Heart left ventricle (tissue), 16 donors: ENCODE measurements at regions of chr12 and their contacts with region 1.

Region 1: DNA sequence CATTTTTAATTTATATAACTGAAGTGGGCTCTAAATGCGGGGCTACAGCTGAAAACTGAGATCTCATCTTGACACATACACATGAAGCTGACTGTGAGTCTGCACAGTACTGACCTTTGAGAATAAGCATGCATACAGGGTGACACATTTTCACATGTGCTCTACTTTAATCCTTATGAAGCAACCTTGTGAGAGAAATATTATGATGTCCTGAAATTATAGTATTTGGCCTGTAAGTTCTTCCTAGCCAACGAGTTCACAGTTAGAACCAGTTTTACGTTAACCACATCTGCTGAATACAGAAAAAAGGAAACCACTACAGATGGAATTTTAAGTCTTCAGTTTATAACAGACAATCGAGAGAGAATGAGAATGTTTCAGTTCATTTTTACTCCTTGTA is 70.3 kb downstream of the SPPL3 start:
- DNase-seq: no peak
- ATAC-seq: peak in 2 of 4 donors; percentile 53 to 57
- H3K4me3 ChIP-seq: no peak overlapping the region
- H3K27ac ChIP-seq: peak overlapping the region in 4 of 12 donors; percentile 15 to 49 (median 38)
- H3K4me1 ChIP-seq: peaks cover 0 to 84% (median 55%) of the 10 kb centered on the region in 12 donors
- H3K27me3 ChIP-seq: no peaks in the 10 kb centered on the region
- CTCF ChIP-seq: no peak
- POLR2A ChIP-seq: no peak

Region 2: GRCh38 chr12:120332041-120332440 is 501.8 kb before region 1 on chr12:
- intact Hi-C with region 1: no loop called
- DNase-seq: no peak
- ATAC-seq: no peak
- H3K4me3 ChIP-seq: no peak overlapping the region
- H3K27ac ChIP-seq: no peak overlapping the region
- H3K4me1 ChIP-seq: no peaks in the 10 kb centered on the region
- H3K27me3 ChIP-seq: no peaks in the 10 kb centered on the region
- CTCF ChIP-seq: no peak
- POLR2A ChIP-seq: no peak

Region 3: GRCh38 chr12:120588948-120589930 is 244.6 kb before region 1 on chr12:
- intact Hi-C with region 1: no loop called
- DNase-seq: peak; percentile 75 to 92 (median 88)
- ATAC-seq: peak; percentile 87 to 94 (median 92)
- H3K4me3 ChIP-seq: no peak overlapping the region
- H3K27ac ChIP-seq: peak overlapping the region; percentile 23 to 89 (median 75)
- H3K4me1 ChIP-seq: peaks cover 0 to 22% (median 11%) of the 10 kb centered on the region in 12 donors
- H3K27me3 ChIP-seq: peaks cover 0 to 9% (median 0%) of the 10 kb centered on the region in 9 donors
- CTCF ChIP-seq: peak in 1 of 12 donors; percentile 8
- POLR2A ChIP-seq: no peak

Region 4: DNA sequence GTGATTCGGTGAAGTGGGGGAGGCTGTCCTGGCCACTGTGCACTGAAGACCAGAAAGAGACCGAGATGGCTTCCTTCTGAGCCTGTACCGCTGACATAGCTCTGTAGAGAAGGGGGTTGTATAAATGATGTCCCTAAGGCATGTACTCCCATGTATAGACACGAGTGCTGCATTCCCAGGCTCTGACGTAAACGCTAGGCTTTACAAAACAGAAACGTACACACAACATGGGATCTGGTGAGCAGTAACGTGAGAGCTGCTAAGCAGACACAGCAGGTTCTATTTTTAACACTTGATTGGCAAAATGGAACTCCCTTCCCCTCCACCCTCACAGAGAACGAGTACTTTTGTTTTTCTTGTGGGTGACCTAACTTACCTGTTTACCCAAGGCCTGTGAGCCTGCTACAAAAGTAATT is 72.3 kb before region 1 on chr12:
- intact Hi-C with region 1: loop called in 1 of 10 experiments (anchors 10 kb)
- DNase-seq: no peak
- ATAC-seq: peak; percentile 68 to 84 (median 73)
- H3K4me3 ChIP-seq: peak overlapping the region in 3 of 12 donors; percentile 3 to 21 (median 4)
- H3K27ac ChIP-seq: peak overlapping the region; percentile 42 to 86 (median 70)
- H3K4me1 ChIP-seq: peaks cover 0 to 21% (median 10%) of the 10 kb centered on the region in 12 donors
- H3K27me3 ChIP-seq: no peaks in the 10 kb centered on the region
- CTCF ChIP-seq: no peak
- POLR2A ChIP-seq: no peak

Region 5: GRCh38 chr12:120801146-120801545 is 32.7 kb before region 1 on chr12:
- intact Hi-C with region 1: loop called in 1 of 10 experiments (anchors 2 kb)
- DNase-seq: no peak
- ATAC-seq: no peak
- H3K4me3 ChIP-seq: no peak overlapping the region
- H3K27ac ChIP-seq: no peak overlapping the region
- H3K4me1 ChIP-seq: peaks cover 0 to 18% (median 1%) of the 10 kb centered on the region in 12 donors
- H3K27me3 ChIP-seq: no peaks in the 10 kb centered on the region
- CTCF ChIP-seq: no peak
- POLR2A ChIP-seq: no peak